Left cardiac atrium (tissue), 4 donors: ENCODE measurements at regions of chr12 and their contacts with region 1.

Region 1: DNA sequence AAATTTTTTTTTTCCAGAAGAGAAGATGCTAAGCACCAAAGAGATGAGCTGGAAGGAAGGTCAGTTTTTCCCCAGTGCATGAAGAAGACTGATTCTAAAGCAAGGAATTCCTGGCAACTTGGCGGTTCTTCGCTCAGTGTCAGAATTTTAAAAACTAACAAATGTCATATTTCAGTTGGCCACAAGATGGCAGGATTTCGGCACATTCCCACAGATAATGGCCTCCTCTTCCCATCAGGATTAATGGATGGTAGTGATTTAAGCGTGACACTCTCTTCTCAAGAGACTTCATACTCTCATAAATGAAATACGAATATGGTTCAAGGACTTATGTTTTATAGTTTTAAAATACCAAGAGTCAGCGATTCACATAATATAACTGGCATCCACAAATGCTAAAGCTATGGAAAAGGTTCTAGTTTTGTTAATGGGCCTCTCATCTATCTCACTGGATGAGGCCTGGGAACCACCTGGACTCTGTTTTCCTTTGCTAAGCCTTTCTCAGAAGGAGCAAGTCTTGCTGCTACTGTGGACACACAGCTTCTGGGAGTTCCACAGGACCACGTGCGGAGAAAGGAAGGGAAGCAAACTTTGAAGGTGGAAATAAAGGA is 46.1 kb upstream of the PTPRO start:
- DNase-seq: no peak
- ATAC-seq: peak; percentile 28 to 50

Region 2: GRCh38 chr12:14756334-14757143 is 519.7 kb before region 1 on chr12:
- intact Hi-C with region 1: no loop called
- DNase-seq: no peak
- ATAC-seq: no peak

Region 3: DNA sequence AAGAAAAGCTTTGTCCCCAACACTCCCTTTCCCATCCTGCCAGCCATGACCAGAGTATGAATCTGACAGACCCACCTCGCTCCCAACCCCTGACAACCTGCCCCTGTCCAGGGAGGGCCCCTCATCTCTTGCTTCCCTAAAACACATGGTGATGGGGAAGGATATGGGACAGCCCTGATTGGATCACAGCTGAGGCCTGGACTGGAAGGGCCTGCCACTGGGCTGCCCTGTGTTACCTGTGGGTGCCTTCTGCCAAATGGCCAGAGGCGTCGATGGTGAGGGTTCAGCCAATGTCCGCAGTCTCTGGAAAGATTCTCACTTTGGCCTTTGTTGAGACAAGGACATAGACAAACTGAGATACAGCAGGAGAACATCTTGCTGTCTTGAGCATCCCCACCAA is 41.7 kb before region 1 on chr12:
- intact Hi-C with region 1: no loop called
- DNase-seq: no peak
- ATAC-seq: no peak

Region 4: GRCh38 chr12:15336768-15337553 is 60.8 kb after region 1 on chr12:
- intact Hi-C with region 1: no loop called
- DNase-seq: no peak
- ATAC-seq: peak in 1 of 2 donors; percentile 92

Region 5: GRCh38 chr12:15522565-15523187 is 246.5 kb after region 1 on chr12:
- intact Hi-C with region 1: loop called in 1 of 2 experiments (anchors 2 kb)
- DNase-seq: no peak
- ATAC-seq: peak; percentile 59

Region 6: DNA sequence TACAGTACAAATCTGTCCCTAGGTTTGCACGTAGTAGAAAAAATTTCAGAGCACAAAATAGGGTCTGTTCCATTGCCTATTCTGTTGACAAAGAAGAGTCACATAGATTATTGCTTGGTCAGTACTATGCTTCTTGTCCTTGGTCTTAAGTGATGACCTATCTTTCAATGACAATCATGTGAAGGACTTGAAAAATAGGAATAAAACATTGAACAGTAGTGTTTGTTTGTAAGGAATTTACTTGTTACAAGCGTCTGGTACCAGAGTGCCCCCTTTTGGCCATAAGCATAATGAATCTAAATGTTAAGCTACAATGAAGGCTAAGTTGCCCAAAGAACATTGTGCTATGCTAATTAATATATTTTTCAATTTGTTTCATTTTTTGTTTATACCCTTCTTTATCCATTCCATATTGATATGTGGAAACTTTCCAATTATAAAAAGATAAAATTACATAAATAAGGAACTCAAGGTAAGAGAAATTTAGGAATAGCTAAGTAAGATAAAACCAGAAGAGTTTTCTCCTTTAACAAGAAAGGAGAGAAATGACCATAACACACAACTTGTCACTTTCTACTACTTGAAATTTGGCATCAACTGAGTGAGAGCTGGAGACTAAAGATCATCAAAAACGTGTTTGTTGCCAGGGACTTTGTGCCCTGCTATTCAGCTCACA is 308.3 kb after region 1 on chr12:
- intact Hi-C with region 1: loop called in 1 of 2 experiments (anchors 5 kb)
- DNase-seq: no peak
- ATAC-seq: peak in 1 of 2 donors; percentile 49

Region 7: GRCh38 chr12:15651371-15651770 is 375.2 kb after region 1 on chr12:
- intact Hi-C with region 1: no loop called
- DNase-seq: no peak
- ATAC-seq: no peak

Region 8: GRCh38 chr12:15863984-15864383 is 587.8 kb after region 1 on chr12:
- intact Hi-C with region 1: loop called in 1 of 2 experiments (anchors 5 kb)
- DNase-seq: no peak
- ATAC-seq: peak in 1 of 2 donors; percentile 42